Heart right ventricle (tissue), 16 donors: ENCODE measurements at regions of chr7 and their contacts with region 1.

Region 1: DNA sequence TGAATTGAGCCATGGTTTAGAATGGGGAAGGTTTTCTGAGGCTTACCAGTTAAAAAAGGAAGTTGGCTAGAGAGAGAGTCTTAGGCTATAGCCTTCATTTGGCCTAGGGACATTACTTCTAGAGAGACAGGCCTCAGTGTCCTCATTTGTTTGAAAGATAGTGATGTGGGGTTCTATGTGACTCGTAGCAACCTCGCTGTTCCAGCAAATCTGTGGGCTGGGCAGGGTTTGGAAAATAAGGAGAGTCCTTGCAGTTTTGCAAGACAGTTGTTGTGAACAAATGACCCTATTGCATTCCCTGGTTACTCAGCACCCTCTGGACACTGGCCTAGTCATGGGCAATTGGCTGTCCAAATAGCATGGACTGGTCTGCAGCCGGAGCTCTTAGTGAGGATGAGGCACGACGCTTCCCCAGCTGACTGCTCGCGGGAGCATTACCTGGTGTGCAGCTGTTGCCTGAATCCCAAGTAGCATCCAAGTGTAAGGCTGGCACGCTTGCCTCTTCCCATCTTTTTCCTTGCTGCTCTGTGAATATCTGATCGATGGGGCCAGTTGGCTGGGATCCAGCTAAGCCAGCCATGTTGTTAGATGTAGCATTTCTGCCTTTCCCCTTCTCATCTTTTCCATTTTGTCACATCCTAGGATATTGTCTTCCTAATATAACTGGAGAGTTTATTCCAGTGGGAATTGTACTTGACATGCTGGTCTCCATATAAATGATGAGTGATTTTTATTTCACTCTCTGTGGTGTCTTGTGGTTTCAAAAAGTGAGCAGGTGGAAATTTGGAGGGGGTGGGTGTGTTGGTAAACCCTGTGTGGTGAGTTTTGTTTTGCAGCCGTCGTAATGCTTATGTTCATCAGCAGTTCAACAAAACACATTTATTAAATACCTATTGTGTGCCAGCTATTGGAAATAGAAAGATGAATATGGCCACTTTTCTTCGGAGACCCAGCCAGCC is 99.8 kb downstream of the SND1 start:
- DNase-seq: no peak
- ATAC-seq: peak in 1 of 8 donors; percentile 31
- H3K4me3 ChIP-seq: no peak overlapping the region
- H3K27ac ChIP-seq: no peak overlapping the region
- H3K4me1 ChIP-seq: peaks cover 0 to 31% (median 6%) of the 10 kb centered on the region in 9 donors
- H3K27me3 ChIP-seq: no peaks in the 10 kb centered on the region
- CTCF ChIP-seq: no peak

Region 2: GRCh38 chr7:127557803-127558202 is 194.0 kb before region 1 on chr7:
- intact Hi-C with region 1: no loop called
- DNase-seq: no peak
- ATAC-seq: no peak
- H3K4me3 ChIP-seq: no peak overlapping the region
- H3K27ac ChIP-seq: no peak overlapping the region
- H3K4me1 ChIP-seq: no peaks in the 10 kb centered on the region
- H3K27me3 ChIP-seq: no peaks in the 10 kb centered on the region
- CTCF ChIP-seq: peak in 4 of 9 donors; percentile 22 to 39 (median 30)

Region 3: GRCh38 chr7:127717502-127718339 is 34.0 kb before region 1 on chr7:
- intact Hi-C with region 1: no loop called
- DNase-seq: no peak
- ATAC-seq: no peak
- H3K4me3 ChIP-seq: no peak overlapping the region
- H3K27ac ChIP-seq: no peak overlapping the region
- H3K4me1 ChIP-seq: peaks cover 0 to 6% (median 0%) of the 10 kb centered on the region in 9 donors
- H3K27me3 ChIP-seq: no peaks in the 10 kb centered on the region
- CTCF ChIP-seq: no peak

Region 4: GRCh38 chr7:127938588-127938987 is 186.8 kb after region 1 on chr7:
- intact Hi-C with region 1: loop called in 1 of 10 experiments (anchors 10 kb)
- DNase-seq: peak in 1 of 2 donors; percentile 5
- ATAC-seq: peak in 1 of 8 donors; percentile 42
- H3K4me3 ChIP-seq: no peak overlapping the region
- H3K27ac ChIP-seq: no peak overlapping the region
- H3K4me1 ChIP-seq: peaks cover 0 to 13% (median 2%) of the 10 kb centered on the region in 9 donors
- H3K27me3 ChIP-seq: no peaks in the 10 kb centered on the region
- CTCF ChIP-seq: peak in 3 of 9 donors; percentile 12 to 30 (median 21)